ENCODE measurements at regions of chr6 and their contacts with region 1.

Region 1: DNA sequence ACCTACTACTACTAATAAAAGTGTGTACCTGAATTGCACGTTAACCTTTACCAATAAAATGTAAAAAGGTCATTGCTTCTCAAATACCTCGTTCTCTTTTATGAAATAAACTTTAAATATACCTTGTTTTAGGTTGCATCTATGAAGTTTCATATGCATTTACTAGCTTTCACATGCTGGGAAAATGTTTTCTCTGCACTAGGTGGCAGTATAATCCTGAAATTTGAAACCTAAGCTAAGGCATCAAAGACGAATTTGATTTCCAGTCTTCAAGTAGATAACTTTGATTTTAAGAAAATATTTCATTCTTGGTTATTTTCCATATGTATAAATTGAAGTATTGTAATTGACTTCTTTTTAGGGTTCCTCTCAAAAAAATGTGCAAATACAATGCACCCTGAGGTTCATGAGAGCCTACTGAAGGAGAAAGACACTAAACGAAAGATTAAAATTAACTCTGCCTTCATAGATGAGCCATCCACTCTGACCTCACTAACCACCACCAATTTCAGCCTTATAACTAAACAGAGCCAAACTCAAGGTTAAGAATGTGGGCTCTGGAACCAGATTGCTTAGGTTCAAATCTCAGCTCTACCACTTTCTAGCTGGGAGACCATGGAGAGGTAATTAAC is 7.3 kb upstream of the COL9A1 start:
- DNase-seq: no peak
- H3K4me3 Mint-ChIP-seq: no peak overlapping the region
- H3K27ac Mint-ChIP-seq: no peak overlapping the region
- H3K4me1 Mint-ChIP-seq: peaks cover 4% of the 10 kb centered on the region
- H3K27me3 Mint-ChIP-seq: peaks cover 19% of the 10 kb centered on the region

Region 2: DNA sequence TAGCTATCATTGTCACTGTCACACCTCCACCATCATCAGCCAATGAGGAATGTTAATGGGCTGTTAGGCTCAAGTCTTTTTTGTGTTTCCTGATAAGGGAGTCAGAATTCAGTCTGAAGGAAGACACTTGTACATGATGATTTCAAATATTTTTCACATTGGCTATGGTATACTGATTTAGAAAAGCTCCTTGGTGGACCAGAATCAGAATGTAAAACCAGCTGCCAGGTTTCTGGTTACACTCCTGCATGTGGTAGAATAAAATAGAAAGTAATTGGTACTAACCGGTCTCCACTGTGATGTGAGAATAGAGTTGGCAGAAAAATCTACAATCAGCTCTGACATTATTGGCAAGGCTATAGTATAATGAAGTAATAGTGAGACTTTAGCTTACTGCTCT is 18.0 kb before region 1 on chr6:
- CTCF ChIA-PET with region 1: interaction called, 19 read pairs
- intact Hi-C with region 1: no loop called
- DNase-seq: no peak
- H3K4me3 Mint-ChIP-seq: no peak overlapping the region
- H3K27ac Mint-ChIP-seq: no peak overlapping the region
- H3K4me1 Mint-ChIP-seq: no peaks in the 10 kb centered on the region
- H3K27me3 Mint-ChIP-seq: peaks cover 7% of the 10 kb centered on the region

Region 3: GRCh38 chr6:70363741-70364493 is 53.7 kb after region 1 on chr6:
- CTCF ChIA-PET with region 1: interaction called, 100 read pairs
- intact Hi-C with region 1: loop called (anchors 1 kb)
- DNase-seq: no peak
- H3K4me3 Mint-ChIP-seq: no peak overlapping the region
- H3K27ac Mint-ChIP-seq: no peak overlapping the region
- H3K4me1 Mint-ChIP-seq: no peaks in the 10 kb centered on the region
- H3K27me3 Mint-ChIP-seq: peaks cover 5% of the 10 kb centered on the region

Region 4: GRCh38 chr6:70389261-70389660 is 79.1 kb after region 1 on chr6:
- CTCF ChIA-PET with region 1: interaction called, 10 read pairs
- intact Hi-C with region 1: no loop called
- DNase-seq: no peak
- H3K4me3 Mint-ChIP-seq: no peak overlapping the region
- H3K27ac Mint-ChIP-seq: no peak overlapping the region
- H3K4me1 Mint-ChIP-seq: no peaks in the 10 kb centered on the region
- H3K27me3 Mint-ChIP-seq: peaks cover 6% of the 10 kb centered on the region

Region 5: GRCh38 chr6:70686548-70687133 is 376.5 kb after region 1 on chr6:
- CTCF ChIA-PET with region 1: interaction called, 5 read pairs
- intact Hi-C with region 1: loop called (anchors 2 kb)
- DNase-seq: no peak
- H3K4me3 Mint-ChIP-seq: no peak overlapping the region
- H3K27ac Mint-ChIP-seq: no peak overlapping the region
- H3K4me1 Mint-ChIP-seq: peaks cover 44% of the 10 kb centered on the region
- H3K27me3 Mint-ChIP-seq: no peaks in the 10 kb centered on the region

Region 6: DNA sequence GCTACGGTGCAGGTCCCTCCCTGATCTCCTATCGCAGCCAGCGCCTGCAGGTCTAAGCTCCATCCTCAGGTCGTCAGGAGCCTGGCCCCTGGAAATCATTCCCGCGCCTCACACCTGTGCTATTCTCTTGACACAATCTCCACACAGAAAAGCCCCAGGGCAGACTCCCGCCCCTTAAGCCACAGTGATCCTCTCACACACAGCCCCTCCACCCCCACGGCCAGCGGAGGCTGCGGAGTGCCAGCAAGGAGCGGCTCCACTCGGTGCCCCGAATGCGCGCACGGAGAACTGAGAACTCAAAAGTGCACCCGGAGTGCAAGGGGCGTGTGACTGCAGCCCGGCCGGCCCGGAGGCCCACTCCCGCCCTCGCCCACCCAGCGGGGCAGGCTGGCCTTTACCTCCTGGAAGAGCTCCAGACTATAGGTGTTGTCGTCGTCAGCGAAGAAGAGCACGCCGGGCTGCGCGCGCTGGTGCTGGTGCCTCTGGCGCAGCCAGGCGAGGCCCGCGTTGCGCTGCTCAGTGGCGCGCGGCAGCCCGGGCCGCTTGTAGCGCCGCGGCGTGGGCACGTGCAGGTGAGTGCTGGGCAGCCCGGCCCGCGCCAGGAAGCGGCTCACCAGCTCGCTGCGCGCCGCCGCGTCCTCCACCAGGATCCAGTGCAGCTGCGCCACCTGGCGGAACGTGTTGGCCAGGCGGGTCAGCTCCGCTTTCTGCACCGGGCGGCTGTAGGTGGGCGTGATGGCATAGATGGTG is 645.4 kb after region 1 on chr6:
- CTCF ChIA-PET with region 1: no interaction called
- intact Hi-C with region 1: loop called (anchors 2 kb)
- DNase-seq: peak; percentile 93
- H3K4me3 Mint-ChIP-seq: peak overlapping the region; percentile 74
- H3K27ac Mint-ChIP-seq: no peak overlapping the region
- H3K4me1 Mint-ChIP-seq: peaks cover 4% of the 10 kb centered on the region
- H3K27me3 Mint-ChIP-seq: peaks cover 49% of the 10 kb centered on the region

Measured in activated naive CD4-positive, alpha-beta T cell treated with anti-CD3 and anti-CD28 coated beads for 36 hours (primary cell).